ENCODE measurements at regions of chr2 and their contacts with region 1.

Region 1: GRCh38 chr2:86249579-86250391 is 50.5 kb downstream of the MRPL35 start:
- DNase-seq: peak; percentile 37 to 84
- H3K4me3 ChIP-seq: no peak overlapping the region
- H3K27ac ChIP-seq: peak overlapping the region; percentile 67 to 85
- H3K4me1 ChIP-seq: peaks cover 6 to 12% of the 10 kb centered on the region in 2 donors
- H3K27me3 ChIP-seq: no peaks in the 10 kb centered on the region
- CTCF ChIP-seq: peak in 2 of 3 experiments; percentile 8 to 19

Region 2: GRCh38 chr2:85785027-85785822 is 464.6 kb before region 1 on chr2:
- intact Hi-C with region 1: no loop called
- DNase-seq: peak in 1 of 2 donors; percentile 83
- H3K4me3 ChIP-seq: peak overlapping the region in 1 of 2 donors; percentile 44
- H3K27ac ChIP-seq: peak overlapping the region; percentile 80 to 93
- H3K4me1 ChIP-seq: peaks cover 28 to 79% of the 10 kb centered on the region in 2 donors
- H3K27me3 ChIP-seq: no peaks in the 10 kb centered on the region
- CTCF ChIP-seq: no peak

Region 3: DNA sequence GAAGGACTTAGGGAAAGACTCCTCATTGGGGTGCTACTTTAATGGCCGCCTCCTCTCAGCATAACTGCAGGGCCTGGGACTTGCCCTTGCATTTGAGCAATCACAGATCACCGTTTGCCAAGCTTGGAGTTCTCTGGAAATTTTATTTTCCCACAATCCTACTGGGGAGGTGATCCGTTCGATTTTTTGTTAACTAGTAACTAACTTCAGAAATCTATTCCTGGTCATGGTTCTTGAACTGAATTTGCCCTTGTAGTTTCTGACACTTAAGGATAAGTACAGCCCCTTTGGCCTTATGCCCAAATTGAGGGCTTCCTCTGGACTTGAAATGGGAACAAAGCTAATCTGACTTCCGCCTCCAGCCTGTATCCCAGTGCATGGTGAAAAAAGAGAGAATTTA is 300.5 kb before region 1 on chr2:
- intact Hi-C with region 1: no loop called
- DNase-seq: no peak
- H3K4me3 ChIP-seq: no peak overlapping the region
- H3K27ac ChIP-seq: no peak overlapping the region
- H3K4me1 ChIP-seq: no peaks in the 10 kb centered on the region
- H3K27me3 ChIP-seq: no peaks in the 10 kb centered on the region
- CTCF ChIP-seq: no peak

Region 4: DNA sequence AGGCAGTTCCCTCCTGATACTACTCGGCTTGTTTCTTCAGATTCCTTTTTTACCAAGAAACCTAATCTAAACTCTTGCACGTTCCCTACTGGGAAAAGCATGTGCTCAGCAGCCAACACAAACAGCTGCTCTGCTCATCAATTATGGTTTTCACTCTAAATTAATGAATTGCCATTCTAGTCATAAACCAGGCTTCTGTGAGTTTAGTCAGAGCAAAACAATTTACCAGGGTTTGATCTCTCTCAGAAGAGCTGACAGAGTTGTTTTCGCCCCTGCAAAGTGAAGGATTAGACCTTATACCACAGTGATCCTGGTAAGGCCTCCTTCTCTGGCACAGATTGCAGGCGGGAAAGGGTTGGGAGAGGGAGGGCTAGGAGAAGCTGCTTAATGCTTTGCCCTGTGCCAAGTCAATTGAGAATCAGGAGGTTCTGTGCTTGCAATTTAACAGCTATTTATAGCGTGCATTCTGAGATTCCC is 30.4 kb after region 1 on chr2:
- intact Hi-C with region 1: loop called (anchors 5 kb)
- DNase-seq: no peak
- H3K4me3 ChIP-seq: no peak overlapping the region
- H3K27ac ChIP-seq: no peak overlapping the region
- H3K4me1 ChIP-seq: peaks cover 0 to 13% of the 10 kb centered on the region in 2 donors
- H3K27me3 ChIP-seq: no peaks in the 10 kb centered on the region
- CTCF ChIP-seq: no peak

Region 5: DNA sequence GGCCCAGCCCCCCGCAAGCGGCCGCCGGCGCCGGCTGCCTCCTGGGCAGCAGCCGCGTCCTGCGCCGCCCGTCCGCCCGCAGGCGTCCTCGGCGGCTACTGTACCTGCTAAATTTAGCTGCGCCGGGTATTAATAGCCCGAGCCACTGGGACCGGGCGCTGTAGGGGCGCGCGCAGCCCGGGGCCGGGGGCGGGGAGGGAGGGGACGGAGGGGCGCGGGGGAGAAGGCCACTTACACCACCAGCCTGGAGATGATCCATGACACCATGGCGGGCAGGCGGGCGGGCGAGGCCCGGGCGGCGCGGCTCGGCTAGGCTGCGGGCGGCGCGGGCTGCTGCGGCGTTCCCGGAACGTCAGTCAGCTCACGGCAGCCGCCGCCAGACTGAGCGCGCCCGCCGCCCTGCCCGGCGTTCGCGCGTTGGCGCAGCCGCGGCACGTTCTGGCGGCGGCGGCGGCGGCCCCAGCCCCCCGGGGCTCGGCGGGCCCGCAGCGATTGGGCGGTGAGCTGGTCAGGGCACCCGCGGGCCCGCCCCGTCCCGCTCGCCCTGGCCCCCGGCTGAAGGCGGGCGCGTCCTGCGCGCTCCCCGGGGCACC is 87.6 kb after region 1 on chr2 and contains the start of gene REEP1:
- intact Hi-C with region 1: loop called (anchors 2 kb)
- DNase-seq: peak in 1 of 2 donors; percentile 66
- H3K4me3 ChIP-seq: peak within 1 kb of the TSS; percentile 79 to 81
- H3K27ac ChIP-seq: peak within 1 kb of the TSS; percentile 45 to 58
- H3K4me1 ChIP-seq: peaks cover 0 to 18% of the 10 kb centered on the region in 2 donors
- H3K27me3 ChIP-seq: no peaks in the 10 kb centered on the region
- CTCF ChIP-seq: no peak
- total RNA-seq, gene REEP1: 6.4 TPM

Region 6: DNA sequence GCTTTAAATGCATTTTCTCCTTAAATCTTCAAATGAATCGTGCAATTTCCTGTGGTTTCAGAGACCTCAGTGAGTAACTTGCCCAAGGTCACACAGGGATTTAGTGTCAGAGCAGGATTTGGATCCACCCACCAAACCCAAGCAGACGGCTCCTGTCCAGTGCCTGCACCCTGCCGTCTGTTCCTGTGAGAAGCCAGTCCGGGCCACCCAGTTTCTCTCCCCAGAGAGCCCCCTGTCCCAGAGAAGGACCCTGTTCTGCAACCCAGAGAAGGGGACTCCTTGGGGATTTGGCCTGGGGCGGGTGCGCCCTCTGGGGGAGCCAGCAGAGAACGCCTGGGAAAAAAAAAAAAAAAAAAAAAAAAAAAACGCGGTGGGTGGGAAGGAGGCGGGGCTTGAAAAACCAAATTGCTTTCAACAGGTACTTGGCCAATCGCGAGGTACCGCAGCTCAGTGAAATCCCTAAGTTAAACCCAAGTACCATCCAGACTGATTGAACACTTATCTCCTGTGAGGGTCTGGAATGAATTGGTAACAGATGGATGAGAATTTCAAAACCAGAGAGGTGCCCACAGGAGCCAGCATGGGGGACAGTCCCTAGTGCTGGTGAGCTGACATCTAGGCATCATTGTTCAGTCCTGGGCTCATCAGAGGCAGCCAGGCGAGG is 118.5 kb after region 1 on chr2:
- intact Hi-C with region 1: no loop called
- DNase-seq: peak in 1 of 2 donors; percentile 63
- H3K4me3 ChIP-seq: peak overlapping the region in 1 of 2 donors; percentile 28
- H3K27ac ChIP-seq: no peak overlapping the region
- H3K4me1 ChIP-seq: no peaks in the 10 kb centered on the region
- H3K27me3 ChIP-seq: no peaks in the 10 kb centered on the region
- CTCF ChIP-seq: peak; percentile 41 to 71 (median 47)

Region 7: DNA sequence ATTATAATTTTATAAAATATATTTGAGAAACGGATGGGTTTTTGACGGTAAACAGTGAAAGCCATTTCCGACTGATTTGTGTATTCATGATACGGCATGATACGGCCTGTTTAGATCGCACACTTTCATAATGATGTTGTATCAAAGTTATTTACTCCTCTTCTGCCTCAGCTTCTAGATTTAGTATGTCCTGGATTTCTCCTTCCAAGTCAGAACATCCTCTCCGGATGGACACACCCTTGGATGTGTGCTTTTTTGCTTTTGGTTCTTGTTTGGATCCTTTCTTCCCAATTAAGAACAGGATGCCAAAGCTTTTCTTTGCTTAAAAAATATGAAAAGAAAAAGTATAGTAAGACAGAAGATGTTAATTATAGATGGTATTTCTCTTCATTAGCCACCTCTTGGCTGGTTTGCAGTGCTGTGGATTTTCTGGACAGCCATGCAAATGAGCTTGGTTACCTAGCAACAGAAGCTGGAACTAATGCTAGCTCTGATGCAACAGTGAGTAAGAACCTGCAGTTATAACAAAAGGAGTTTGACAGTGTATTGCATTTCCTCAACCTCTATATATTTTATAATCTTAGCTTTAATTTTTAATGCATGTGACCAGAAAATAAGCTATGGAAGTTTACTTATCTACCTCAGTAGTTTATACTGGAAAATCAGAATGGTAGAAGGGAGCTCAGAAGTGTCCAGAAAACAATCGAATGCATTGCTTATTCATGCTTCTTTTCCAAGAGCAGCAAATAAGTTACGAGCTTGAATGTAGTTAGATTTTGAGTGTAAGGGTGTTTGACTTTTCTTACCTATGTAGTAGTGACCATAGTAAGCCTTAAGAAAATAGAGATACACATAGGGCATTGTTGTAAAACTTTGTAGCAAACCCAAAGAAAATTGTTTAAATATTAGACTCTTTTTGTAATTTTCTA is 498.2 kb after region 1 on chr2:
- intact Hi-C with region 1: no loop called
- DNase-seq: no peak
- H3K4me3 ChIP-seq: no peak overlapping the region
- H3K27ac ChIP-seq: no peak overlapping the region
- H3K4me1 ChIP-seq: no peaks in the 10 kb centered on the region
- H3K27me3 ChIP-seq: no peaks in the 10 kb centered on the region
- CTCF ChIP-seq: no peak